Common myeloid progenitor, CD34-positive (primary cell): ENCODE measurements at regions of chr1 and their contacts with region 1.

Region 1: GRCh38 chr1:77825131-77825709 is 45.8 kb downstream of the MIGA1 start:
- DNase-seq: peak; percentile 70 to 85 (median 83)
- H3K4me3 ChIP-seq: no peak overlapping the region
- H3K27ac ChIP-seq: no peak overlapping the region
- H3K4me1 ChIP-seq: no peaks in the 10 kb centered on the region
- H3K27me3 ChIP-seq: no peaks in the 10 kb centered on the region

Region 2: GRCh38 chr1:77473690-77474089 is 351.5 kb before region 1 on chr1:
- CTCF ChIA-PET with region 1: no interaction called
- POLR2A ChIA-PET with region 1: no interaction called
- DNase-seq: no peak
- H3K4me3 ChIP-seq: no peak overlapping the region
- H3K27ac ChIP-seq: no peak overlapping the region
- H3K4me1 ChIP-seq: peaks cover 0 to 15% (median 0%) of the 10 kb centered on the region in 4 experiments
- H3K27me3 ChIP-seq: no peaks in the 10 kb centered on the region

Region 3: GRCh38 chr1:77900687-77901293 is 75.6 kb after region 1 on chr1:
- CTCF ChIA-PET with region 1: interaction called, 17 read pairs
- POLR2A ChIA-PET with region 1: no interaction called
- DNase-seq: peak; percentile 53 to 68 (median 62)
- H3K4me3 ChIP-seq: no peak overlapping the region
- H3K27ac ChIP-seq: no peak overlapping the region
- H3K4me1 ChIP-seq: no peaks in the 10 kb centered on the region
- H3K27me3 ChIP-seq: no peaks in the 10 kb centered on the region

Region 4: GRCh38 chr1:77948841-77949424 is 123.7 kb after region 1 on chr1:
- CTCF ChIA-PET with region 1: no interaction called
- POLR2A ChIA-PET with region 1: no interaction called
- DNase-seq: peak; percentile 15 to 59 (median 36)
- H3K4me3 ChIP-seq: no peak overlapping the region
- H3K27ac ChIP-seq: no peak overlapping the region
- H3K4me1 ChIP-seq: peaks cover 0 to 26% (median 16%) of the 10 kb centered on the region in 4 experiments
- H3K27me3 ChIP-seq: no peaks in the 10 kb centered on the region

Region 5: DNA sequence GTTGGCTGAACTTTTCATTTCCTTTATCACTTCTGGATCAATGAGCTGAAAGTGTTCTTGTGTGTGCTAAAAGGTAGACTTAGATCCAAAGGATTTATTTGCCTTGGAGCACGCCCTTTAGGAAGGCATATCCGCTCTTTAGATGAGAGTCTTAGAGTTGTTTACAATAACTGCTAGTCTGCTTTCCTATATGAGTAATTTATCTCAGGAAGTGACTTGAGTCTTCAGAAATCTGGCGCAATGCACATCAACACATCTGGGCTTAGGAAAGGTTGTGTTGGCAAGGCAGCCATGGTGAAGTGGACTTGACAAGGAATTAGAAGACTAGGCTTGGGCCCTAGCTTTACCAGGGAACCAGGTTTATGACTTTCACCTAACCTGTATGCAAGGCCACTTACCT is 461.5 kb after region 1 on chr1:
- CTCF ChIA-PET with region 1: no interaction called
- POLR2A ChIA-PET with region 1: no interaction called
- DNase-seq: no peak
- H3K4me3 ChIP-seq: no peak overlapping the region
- H3K27ac ChIP-seq: no peak overlapping the region
- H3K4me1 ChIP-seq: no peaks in the 10 kb centered on the region
- H3K27me3 ChIP-seq: peaks cover 0 to 2% (median 0%) of the 10 kb centered on the region in 5 experiments

Region 6: GRCh38 chr1:78440381-78440793 is 615.2 kb after region 1 on chr1:
- CTCF ChIA-PET with region 1: no interaction called
- POLR2A ChIA-PET with region 1: no interaction called
- DNase-seq: no peak
- H3K4me3 ChIP-seq: no peak overlapping the region
- H3K27ac ChIP-seq: no peak overlapping the region
- H3K4me1 ChIP-seq: no peaks in the 10 kb centered on the region
- H3K27me3 ChIP-seq: no peaks in the 10 kb centered on the region